ENCODE measurements at regions of chr6 and their contacts with region 1.

Region 1: DNA sequence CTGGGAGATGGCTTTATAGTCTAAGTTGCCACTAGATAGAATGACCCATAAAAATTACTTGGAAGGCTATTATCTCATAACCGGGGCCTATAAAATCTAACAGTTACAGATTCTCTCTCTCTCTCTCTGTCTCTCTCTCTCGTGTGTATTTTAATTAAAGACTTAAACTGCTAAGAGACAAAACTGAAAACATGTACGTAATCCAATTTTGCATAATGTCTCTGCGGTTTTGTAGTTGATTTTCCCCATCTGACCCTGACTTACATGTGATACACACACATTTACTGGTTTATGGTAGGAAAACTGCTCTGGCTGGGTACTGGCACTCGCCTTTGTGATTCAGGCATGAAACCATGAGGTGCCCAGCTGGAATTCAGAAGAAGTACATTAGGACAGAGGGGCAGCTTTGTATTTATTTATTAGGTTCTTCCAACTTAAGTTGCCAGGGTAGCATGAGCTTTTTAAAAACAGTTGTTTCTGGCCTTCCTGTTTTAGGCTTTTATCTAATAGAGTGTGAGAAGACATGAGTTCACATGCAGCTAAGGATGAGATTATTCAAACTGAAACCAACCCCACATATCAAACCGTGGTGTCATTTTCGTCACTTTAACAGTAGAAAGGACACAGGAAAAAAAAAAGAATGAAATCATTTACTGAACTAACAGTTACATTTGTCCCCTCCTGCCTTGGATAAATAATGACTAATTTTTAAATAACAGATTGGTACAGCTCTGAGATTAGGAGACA is 182.5 kb downstream of the GMPR start:
- DNase-seq: peak; percentile 66
- ATAC-seq: peak; percentile 82
- H3K4me3 Mint-ChIP-seq: peak overlapping the region; percentile 58
- H3K27ac Mint-ChIP-seq: peak overlapping the region; percentile 94
- H3K4me1 Mint-ChIP-seq: peaks cover 53% of the 10 kb centered on the region
- H3K27me3 Mint-ChIP-seq: no peaks in the 10 kb centered on the region

Region 2: DNA sequence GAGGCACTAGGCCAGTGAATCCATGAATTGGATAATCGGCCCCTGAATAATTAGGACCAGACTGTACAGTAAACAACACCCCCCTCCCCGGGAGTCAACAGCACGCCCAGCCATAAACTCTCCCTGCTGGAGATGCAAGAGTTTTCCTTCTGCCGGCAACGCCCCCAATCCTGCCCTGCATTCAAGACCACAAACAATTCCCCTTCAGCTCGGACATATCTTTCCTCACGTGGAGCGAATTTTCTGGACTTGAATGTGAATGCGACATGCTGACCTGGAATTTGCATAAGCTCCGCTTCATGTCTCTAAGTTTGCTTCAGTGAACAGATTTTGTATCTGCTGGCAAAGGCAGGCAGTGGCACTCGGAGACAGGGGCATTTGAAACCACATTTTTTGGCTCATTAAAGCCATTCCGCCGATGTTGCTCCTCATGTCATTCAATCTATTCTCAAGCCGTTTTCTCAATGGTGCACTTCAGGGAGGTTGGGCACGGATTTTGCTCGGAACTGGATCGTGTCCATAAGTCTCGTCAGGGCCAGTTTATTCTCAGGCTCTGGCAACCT is 220.5 kb before region 1 on chr6:
- CTCF ChIA-PET with region 1: no interaction called
- POLR2A ChIA-PET with region 1: no interaction called
- intact Hi-C with region 1: no loop called
- DNase-seq: no peak
- ATAC-seq: no peak
- H3K4me3 Mint-ChIP-seq: no peak overlapping the region
- H3K27ac Mint-ChIP-seq: no peak overlapping the region
- H3K4me1 Mint-ChIP-seq: no peaks in the 10 kb centered on the region
- H3K27me3 Mint-ChIP-seq: peaks cover 6% of the 10 kb centered on the region

Region 3: GRCh38 chr6:16432075-16433032 is 11.5 kb after region 1 on chr6:
- CTCF ChIA-PET with region 1: interaction called, 5 read pairs
- POLR2A ChIA-PET with region 1: interaction called, 4 read pairs
- intact Hi-C with region 1: loop called (anchors 1 to 2 kb)
- DNase-seq: peak; percentile 37
- ATAC-seq: peak; percentile 46
- H3K4me3 Mint-ChIP-seq: no peak overlapping the region
- H3K27ac Mint-ChIP-seq: peak overlapping the region; percentile 38
- H3K4me1 Mint-ChIP-seq: peaks cover 58% of the 10 kb centered on the region
- H3K27me3 Mint-ChIP-seq: no peaks in the 10 kb centered on the region

Region 4: DNA sequence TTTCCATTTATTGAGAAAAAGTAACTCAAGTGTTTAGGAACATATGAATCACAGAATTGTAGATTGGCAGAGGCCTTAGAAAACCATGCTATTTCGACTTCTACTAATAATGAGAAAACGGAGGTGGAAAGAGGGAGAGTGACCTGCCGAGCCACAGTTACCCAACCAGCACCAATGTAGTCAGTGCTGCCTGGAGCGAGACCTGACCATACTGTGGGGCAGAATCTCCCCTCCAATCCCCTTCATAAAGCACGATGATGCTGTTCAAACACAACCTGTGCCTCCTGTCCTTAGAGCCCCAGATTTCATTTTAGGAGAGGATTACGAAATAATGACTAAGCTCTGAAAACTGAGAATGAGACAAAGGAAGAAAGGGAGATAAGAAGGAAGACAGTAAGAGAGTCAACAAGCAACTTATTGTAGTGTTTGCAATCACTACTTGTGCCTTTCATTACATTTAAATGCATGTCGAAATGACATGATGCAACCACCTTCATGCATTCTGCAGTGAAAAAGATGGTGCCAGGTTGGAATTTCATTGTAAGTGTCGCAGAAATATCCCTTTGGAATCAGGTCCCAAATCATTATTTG is 269.8 kb after region 1 on chr6:
- CTCF ChIA-PET with region 1: no interaction called
- POLR2A ChIA-PET with region 1: no interaction called
- intact Hi-C with region 1: loop called in 1 of 2 experiments (anchors 2 kb)
- DNase-seq: peak; percentile 73
- ATAC-seq: peak; percentile 75
- H3K4me3 Mint-ChIP-seq: peak overlapping the region; percentile 34
- H3K27ac Mint-ChIP-seq: peak overlapping the region; percentile 88
- H3K4me1 Mint-ChIP-seq: peaks cover 88% of the 10 kb centered on the region
- H3K27me3 Mint-ChIP-seq: no peaks in the 10 kb centered on the region

Measured in activated CD4-positive, alpha-beta T cell treated with anti-CD3 and anti-CD28 coated beads for 36 hours (primary cell).